HEK293 (cell line): ENCODE measurements at regions of chr6 and their contacts with region 1.

Region 1: DNA sequence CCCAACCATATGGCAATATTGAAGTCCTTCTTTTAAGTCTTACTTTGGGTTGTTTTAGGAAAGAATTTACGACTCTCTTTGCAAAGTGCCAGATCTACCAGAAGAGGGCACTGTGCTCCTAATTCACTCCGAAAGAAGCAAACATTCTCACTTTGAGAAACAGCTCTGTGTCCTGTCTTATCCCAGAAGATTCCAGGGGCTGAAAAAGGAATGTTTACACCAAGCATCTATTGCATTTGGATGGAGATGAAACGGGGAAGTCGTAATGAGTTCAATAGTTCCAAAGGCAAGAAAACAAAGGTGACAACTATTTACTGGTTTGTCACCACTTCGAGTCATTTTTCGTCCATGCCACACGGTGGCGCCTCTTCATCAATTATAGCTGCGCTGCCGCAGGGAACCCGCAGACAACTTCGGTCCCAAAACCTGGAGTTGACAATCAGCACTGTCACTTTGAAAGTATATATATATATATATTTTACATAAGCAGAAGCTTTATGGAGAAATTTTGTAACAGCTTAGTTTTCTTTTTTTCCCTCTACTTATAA is 121.6 kb downstream of the MOXD1 start:
- H3K4me3 ChIP-seq: peak overlapping the region; percentile 46
- H3K27ac ChIP-seq: no peak overlapping the region
- H3K4me1 ChIP-seq: no peaks in the 10 kb centered on the region
- CTCF ChIP-seq: peak; percentile 85

Region 2: GRCh38 chr6:131909408-131910218 is 370.1 kb before region 1 on chr6:
- CTCF ChIA-PET with region 1: interaction called, 66 read pairs
- POLR2A ChIA-PET with region 1: no interaction called
- H3K4me3 ChIP-seq: no peak overlapping the region
- H3K27ac ChIP-seq: no peak overlapping the region
- H3K4me1 ChIP-seq: no peaks in the 10 kb centered on the region
- CTCF ChIP-seq: peak; percentile 26; the same call in 1 of the 2 replicates

Region 3: DNA sequence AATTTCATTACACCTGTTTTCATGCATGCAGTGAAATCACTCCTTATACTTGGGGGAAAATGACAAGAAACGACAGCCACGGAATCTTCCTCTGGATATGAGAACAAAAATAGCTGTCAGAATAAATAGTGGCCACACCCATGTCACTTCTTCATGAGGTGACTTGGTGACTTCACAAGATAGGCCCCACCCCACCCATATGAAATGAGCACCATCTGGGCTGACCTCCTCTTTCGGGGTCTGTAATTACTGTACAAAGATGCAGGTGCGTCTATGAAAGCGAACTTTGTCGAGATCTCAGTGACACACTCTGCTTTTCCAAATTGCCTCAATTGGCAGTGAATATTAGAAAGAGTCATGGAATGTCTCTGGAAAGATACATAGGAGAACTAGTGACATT is 144.3 kb before region 1 on chr6:
- CTCF ChIA-PET with region 1: no interaction called
- POLR2A ChIA-PET with region 1: no interaction called
- H3K4me3 ChIP-seq: no peak overlapping the region
- H3K27ac ChIP-seq: no peak overlapping the region
- H3K4me1 ChIP-seq: peaks cover 5% of the 10 kb centered on the region; the same call in 1 of the 2 replicates
- CTCF ChIP-seq: no peak

Region 4: DNA sequence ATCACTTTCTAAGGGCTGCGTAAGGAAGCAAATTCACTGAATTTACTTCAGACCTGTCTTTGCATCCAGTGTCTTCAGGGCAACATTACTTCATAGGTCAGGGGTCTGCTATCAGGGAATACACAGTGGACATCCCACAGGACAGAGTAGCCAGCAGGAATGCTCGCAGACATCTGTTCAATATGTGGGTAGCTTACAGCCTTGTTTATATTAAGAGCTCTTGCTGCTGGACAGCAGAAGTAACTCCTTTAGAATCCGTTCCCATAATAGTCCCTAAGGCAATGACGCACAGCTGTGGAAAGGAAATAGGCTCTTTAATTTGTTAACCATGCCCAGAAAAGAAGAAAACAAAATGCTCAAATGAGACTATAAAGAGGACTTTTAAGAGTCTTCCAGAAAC is 77.1 kb before region 1 on chr6:
- CTCF ChIA-PET with region 1: no interaction called
- POLR2A ChIA-PET with region 1: no interaction called
- H3K4me3 ChIP-seq: no peak overlapping the region
- H3K27ac ChIP-seq: no peak overlapping the region
- H3K4me1 ChIP-seq: no peaks in the 10 kb centered on the region
- CTCF ChIP-seq: no peak

Region 5: GRCh38 chr6:132227904-132228303 is 51.8 kb before region 1 on chr6:
- CTCF ChIA-PET with region 1: interaction called, 11 read pairs
- POLR2A ChIA-PET with region 1: no interaction called
- H3K4me3 ChIP-seq: no peak overlapping the region
- H3K27ac ChIP-seq: no peak overlapping the region
- H3K4me1 ChIP-seq: no peaks in the 10 kb centered on the region
- CTCF ChIP-seq: no peak

Region 6: GRCh38 chr6:132320007-132320406 is 40.3 kb after region 1 on chr6:
- CTCF ChIA-PET with region 1: interaction called, 23 read pairs
- POLR2A ChIA-PET with region 1: no interaction called
- H3K4me3 ChIP-seq: no peak overlapping the region
- H3K27ac ChIP-seq: no peak overlapping the region
- H3K4me1 ChIP-seq: no peaks in the 10 kb centered on the region
- CTCF ChIP-seq: no peak

Region 7: DNA sequence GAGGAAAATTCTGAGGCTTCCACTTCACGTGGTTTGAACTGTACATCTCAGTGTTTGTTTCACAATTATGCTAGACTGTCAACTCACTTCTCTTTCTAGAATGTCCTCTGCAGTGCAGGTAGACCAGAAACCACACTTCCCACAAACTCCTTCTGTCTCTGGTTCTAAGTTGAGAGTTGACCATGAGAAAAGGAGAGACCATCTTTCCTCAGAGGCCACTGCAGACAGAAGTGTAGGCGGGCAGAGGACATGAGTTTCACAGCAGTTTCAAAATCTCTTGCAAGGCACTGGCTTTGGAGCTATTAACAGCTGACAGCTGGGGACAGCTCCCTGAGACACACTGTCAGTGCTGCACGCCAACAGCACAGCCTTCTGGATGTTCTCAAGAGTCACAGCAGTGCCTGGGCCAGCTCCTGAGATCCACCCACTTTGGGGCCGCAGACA is 177.1 kb after region 1 on chr6:
- CTCF ChIA-PET with region 1: interaction called, 22 read pairs
- POLR2A ChIA-PET with region 1: no interaction called
- H3K4me3 ChIP-seq: no peak overlapping the region
- H3K27ac ChIP-seq: no peak overlapping the region
- H3K4me1 ChIP-seq: no peaks in the 10 kb centered on the region
- CTCF ChIP-seq: no peak

Region 8: GRCh38 chr6:132512638-132513632 is 233.3 kb after region 1 on chr6 and contains the start of gene STX7:
- CTCF ChIA-PET with region 1: interaction called, 12 read pairs
- POLR2A ChIA-PET with region 1: no interaction called
- H3K4me3 ChIP-seq: peak within 1 kb of the TSS; percentile 85
- H3K27ac ChIP-seq: peak within 1 kb of the TSS; percentile 6; the same call in 1 of the 2 replicates
- H3K4me1 ChIP-seq: peaks cover 5% of the 10 kb centered on the region
- CTCF ChIP-seq: no peak

Region 9: DNA sequence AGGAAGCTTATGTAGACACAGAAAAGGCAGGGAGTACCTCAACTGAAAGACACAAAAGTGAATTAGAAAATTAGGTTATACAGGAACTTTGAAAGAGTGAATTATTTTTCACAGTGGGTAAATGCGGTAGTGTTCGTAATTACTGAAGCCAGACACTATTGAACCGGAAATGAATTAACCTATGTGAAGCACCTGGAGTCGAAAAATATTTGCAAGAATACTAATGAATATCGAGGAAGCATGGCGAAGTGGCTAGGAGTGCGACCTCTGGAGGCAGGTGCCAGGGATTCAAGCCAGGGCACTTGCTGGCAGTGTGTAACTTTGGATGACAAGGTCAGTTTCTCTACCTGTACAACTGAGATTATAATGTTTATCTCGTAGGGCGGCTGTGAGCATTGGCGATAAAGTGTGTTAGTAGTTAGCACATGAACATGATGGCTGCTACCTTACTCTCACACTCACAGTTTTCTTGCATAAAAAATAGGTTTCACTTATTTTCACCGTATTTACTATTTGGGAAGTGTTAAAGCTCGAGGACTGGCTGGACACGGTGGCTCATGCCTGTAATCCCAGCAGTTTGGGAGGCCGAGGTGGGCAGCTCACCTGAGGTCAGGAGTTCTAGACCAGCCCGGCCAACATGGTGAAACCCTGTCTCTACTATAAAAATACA is 519.3 kb after region 1 on chr6:
- CTCF ChIA-PET with region 1: interaction called, 11 read pairs
- POLR2A ChIA-PET with region 1: interaction called, 3 read pairs
- H3K4me3 ChIP-seq: peak overlapping the region; percentile 84
- H3K27ac ChIP-seq: peak overlapping the region; percentile 67; the same call in 1 of the 2 replicates
- H3K4me1 ChIP-seq: 0 out of 2 replicates have a peak, but pooled peaks cover 2% of the 10 kb centered on the region
- CTCF ChIP-seq: peak; percentile 74